Posterior vena cava (tissue), 2 donors: ENCODE measurements at regions of chr11 and their contacts with region 1.

Region 1: DNA sequence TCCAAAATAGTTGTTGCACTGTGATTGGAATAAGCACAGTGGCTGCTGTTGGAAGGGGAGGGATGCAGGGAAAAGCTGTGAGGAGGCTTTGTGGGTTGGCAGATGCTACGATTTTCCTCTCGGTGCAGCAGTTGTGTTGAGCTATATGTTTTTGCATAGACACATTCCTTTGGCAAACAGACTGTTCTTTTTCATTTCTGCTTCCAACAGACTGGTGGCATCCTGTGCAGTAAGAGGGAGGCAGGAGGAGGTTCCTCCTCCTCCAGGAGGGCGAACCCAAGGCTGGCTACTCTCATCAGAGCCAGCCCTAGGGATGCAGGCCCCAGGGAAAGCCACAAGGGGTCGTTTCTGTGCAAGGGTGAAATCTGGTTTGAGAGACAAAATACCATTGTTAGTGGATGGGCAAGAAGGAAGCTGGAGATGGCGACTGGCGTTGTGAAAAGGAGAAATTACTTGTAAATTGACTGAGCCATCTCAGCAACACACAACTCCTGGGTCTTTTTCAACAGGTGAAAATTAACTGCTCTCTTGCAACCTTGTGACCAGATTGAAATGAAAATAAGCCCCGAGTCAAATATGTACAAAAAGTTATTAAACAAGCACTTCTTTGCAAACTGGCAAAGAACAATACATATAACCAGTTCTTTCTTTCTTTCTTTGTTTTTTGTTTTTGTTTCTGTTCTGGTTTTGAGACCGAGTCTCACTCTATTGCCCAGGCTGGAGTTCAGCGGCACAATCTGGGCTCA is 26.5 kb upstream of the UBASH3B start:
- DNase-seq: peak; percentile 87

Region 2: GRCh38 chr11:122468965-122469364 is 160.0 kb before region 1 on chr11:
- intact Hi-C with region 1: no loop called
- DNase-seq: no peak

Region 3: DNA sequence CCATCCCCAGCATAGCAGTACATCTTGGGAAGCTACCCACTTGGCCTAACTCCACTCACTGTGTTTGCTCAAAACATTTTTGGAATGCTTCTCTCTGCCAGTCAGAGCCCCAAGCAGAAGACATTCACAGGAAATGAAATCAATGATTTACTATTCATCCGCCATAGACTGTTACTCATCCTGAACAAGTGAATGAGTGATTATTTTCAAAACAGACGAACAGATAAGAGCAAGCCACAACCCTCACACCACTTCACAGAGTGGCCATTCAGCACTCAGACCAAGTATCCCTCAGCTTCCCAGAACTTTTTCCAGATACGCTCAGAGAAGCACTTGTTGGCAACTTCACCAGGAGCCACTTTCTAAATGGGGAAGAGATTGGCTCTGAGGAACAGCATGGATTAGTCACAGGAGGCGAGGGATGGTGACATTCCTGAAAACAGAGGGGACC is 13.5 kb after region 1 on chr11:
- intact Hi-C with region 1: no loop called
- DNase-seq: no peak

Region 4: DNA sequence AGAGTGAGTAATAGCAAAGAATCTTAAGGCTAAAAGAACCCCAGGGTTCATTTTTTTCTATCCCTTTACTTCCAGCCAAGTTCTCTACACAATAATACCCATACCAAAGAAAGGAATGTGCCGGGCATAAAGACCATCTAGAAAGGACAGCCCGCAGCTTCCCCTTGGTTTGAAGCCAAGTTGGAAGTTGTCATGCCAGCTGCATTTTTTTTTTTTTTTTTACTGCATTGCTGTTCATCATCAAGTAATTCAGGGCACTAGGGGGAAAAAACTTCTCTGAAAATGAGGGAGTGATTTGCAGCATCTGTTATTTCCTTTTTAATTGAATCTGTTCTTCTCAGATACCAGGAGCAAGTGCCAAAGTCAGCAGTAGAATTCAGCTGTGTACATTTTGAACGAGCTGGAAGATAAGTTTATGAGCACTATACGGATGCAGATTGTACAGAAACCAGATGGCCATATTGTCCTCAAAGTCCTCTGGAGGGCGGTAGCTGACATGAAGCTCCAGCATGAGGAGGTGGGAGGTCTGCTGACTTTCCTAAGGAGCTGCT is 82.9 kb after region 1 on chr11:
- intact Hi-C with region 1: no loop called
- DNase-seq: no peak

Region 5: GRCh38 chr11:122853971-122854446 is 225.0 kb after region 1 on chr11:
- intact Hi-C with region 1: loop called (anchors 2 to 5 kb)
- DNase-seq: no peak

Region 6: GRCh38 chr11:124086005-124086846 is 1457.2 kb after region 1 on chr11:
- intact Hi-C with region 1: no loop called
- DNase-seq: no peak